Activated CD4-positive, alpha-beta T cell treated with anti-CD3 and anti-CD28 coated beads for 36 hours (primary cell): ENCODE measurements at regions of chr3 and their contacts with region 1.

Region 1: GRCh38 chr3:18382760-18383369 is 42.3 kb downstream of the SATB1 start:
- DNase-seq: peak; percentile 39
- ATAC-seq: peak; percentile 50
- H3K4me3 Mint-ChIP-seq: peak overlapping the region; percentile 9
- H3K27ac Mint-ChIP-seq: peak overlapping the region; percentile 24
- H3K4me1 Mint-ChIP-seq: peaks cover 75% of the 10 kb centered on the region
- H3K27me3 Mint-ChIP-seq: no peaks in the 10 kb centered on the region

Region 2: GRCh38 chr3:17874632-17875031 is 508.2 kb before region 1 on chr3:
- CTCF ChIA-PET with region 1: no interaction called
- POLR2A ChIA-PET with region 1: no interaction called
- intact Hi-C with region 1: no loop called
- DNase-seq: no peak
- ATAC-seq: no peak
- H3K4me3 Mint-ChIP-seq: no peak overlapping the region
- H3K27ac Mint-ChIP-seq: no peak overlapping the region
- H3K4me1 Mint-ChIP-seq: no peaks in the 10 kb centered on the region
- H3K27me3 Mint-ChIP-seq: peaks cover 6% of the 10 kb centered on the region

Region 3: DNA sequence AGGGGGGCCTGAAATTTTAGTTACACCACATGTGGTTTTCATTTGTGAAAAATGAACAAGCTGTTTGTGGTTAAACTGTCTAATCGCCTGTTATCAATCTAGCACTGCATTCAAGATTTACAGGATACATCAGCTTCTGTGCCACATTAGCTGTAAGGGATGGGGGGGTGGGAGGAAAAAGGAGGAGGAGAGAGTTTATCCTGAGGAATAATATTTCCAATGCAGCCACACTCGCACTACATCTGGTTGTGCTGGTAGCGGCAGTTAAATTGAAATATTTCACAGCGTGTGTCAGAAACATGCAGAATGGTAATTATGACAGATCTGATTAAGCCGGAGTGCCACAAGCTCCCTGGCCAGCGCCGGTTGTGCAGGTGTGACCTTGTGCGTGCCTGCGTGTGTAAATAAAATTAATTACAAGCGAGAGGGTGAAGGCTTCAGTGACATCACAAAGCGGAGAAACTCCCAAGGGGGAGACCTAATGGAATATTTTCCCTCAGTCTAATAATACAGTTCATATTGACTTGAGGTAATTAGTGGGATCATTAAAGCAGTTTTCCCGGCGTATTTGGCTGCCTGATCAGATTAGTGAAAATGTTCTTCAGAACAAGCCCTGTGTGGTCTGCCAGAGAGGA is 13.2 kb before region 1 on chr3:
- CTCF ChIA-PET with region 1: interaction called, 3 read pairs
- POLR2A ChIA-PET with region 1: no interaction called
- intact Hi-C with region 1: loop called in 1 of 2 experiments (anchors 1 kb)
- DNase-seq: no peak
- ATAC-seq: no peak
- H3K4me3 Mint-ChIP-seq: no peak overlapping the region
- H3K27ac Mint-ChIP-seq: peak overlapping the region; percentile 72
- H3K4me1 Mint-ChIP-seq: peaks cover 85% of the 10 kb centered on the region
- H3K27me3 Mint-ChIP-seq: no peaks in the 10 kb centered on the region

Region 4: DNA sequence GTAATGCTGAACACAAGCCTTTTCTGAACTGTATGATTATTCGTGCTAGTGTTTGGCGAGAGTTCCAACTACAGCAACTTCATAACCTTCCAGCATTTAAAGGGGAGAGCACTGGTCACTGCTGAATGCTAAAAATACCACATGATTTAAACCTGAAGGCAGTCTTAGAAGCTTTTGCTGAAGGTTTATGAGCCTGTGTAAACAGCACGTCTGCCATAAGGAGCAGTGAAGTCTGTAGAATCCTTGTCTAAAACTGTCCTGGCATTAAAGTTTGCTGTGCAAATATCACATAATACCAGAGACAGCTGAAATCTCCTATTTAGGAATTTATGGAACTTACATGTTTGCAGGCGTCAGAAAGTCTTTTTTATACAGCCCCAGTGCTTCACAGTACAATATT is 36.4 kb after region 1 on chr3:
- CTCF ChIA-PET with region 1: no interaction called
- POLR2A ChIA-PET with region 1: interaction called, 3 read pairs
- intact Hi-C with region 1: loop called in 1 of 2 experiments (anchors 2 kb)
- DNase-seq: no peak
- ATAC-seq: no peak
- H3K4me3 Mint-ChIP-seq: peak overlapping the region; percentile 85
- H3K27ac Mint-ChIP-seq: peak overlapping the region; percentile 95
- H3K4me1 Mint-ChIP-seq: peaks cover 92% of the 10 kb centered on the region
- H3K27me3 Mint-ChIP-seq: no peaks in the 10 kb centered on the region